RWPE1 (cell line): ENCODE measurements at regions of chr3 and their contacts with region 1.

Region 1: GRCh38 chr3:179929091-179929529 is 107.6 kb downstream of the PEX5L start:
- DNase-seq: peak; percentile 58
- H3K27ac ChIP-seq: no peak overlapping the region
- CTCF ChIP-seq: peak; percentile 72

Region 2: GRCh38 chr3:180594631-180595558 is 665.8 kb after region 1 on chr3:
- CTCF ChIA-PET with region 1: interaction called, 12 read pairs
- POLR2A ChIA-PET with region 1: no interaction called
- DNase-seq: peak; percentile 32
- H3K27ac ChIP-seq: no peak overlapping the region
- CTCF ChIP-seq: peak; percentile 54